ENCODE measurements at regions of chr16 and their contacts with region 1.

Region 1: GRCh38 chr16:21603928-21604327 is 4.6 kb downstream of the METTL9 start:
- DNase-seq: no peak
- H3K4me3 ChIP-seq: no peak overlapping the region
- H3K27ac ChIP-seq: no peak overlapping the region
- H3K4me1 ChIP-seq: peaks cover 0 to 12% (median 4%) of the 10 kb centered on the region in 4 experiments; a peak in 6 of 7 replicates
- H3K27me3 ChIP-seq: no peaks in the 10 kb centered on the region
- CTCF ChIP-seq: no peak
- EP300 ChIP-seq: no peak
- POLR2A ChIP-seq: no peak
- RAD21 ChIP-seq: no peak

Region 2: DNA sequence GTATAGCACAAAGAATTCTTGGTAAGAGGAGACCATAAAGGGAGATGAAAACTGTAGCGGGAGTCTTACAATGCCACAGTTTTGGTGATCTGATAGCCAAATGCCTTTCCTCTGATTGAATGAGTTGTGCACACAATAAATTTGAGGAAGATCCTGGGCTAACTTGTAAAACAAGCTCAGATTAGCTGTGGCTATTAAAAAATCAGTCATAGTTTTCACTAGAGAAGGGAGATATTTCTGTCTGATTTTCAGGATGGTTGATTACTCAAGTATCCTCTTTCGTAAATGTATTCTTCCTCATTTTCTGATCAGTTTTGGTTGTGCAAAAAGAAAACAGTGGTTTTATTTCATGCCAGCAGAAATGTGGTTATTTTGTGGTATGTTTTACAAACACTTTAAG is 13.6 kb before region 1 on chr16:
- CTCF ChIA-PET with region 1: interaction called, 13 read pairs
- POLR2A ChIA-PET with region 1: interaction called, 5 read pairs
- DNase-seq: no peak
- H3K4me3 ChIP-seq: no peak overlapping the region
- H3K27ac ChIP-seq: no peak overlapping the region
- H3K4me1 ChIP-seq: no peaks in the 10 kb centered on the region
- H3K27me3 ChIP-seq: no peaks in the 10 kb centered on the region
- CTCF ChIP-seq: no peak
- EP300 ChIP-seq: no peak
- POLR2A ChIP-seq: no peak
- RAD21 ChIP-seq: no peak

Region 3: GRCh38 chr16:21650521-21650920 is 46.6 kb after region 1 on chr16:
- CTCF ChIA-PET with region 1: no interaction called
- POLR2A ChIA-PET with region 1: no interaction called
- DNase-seq: no peak
- H3K4me3 ChIP-seq: no peak overlapping the region
- H3K27ac ChIP-seq: no peak overlapping the region
- H3K4me1 ChIP-seq: no peaks in the 10 kb centered on the region
- H3K27me3 ChIP-seq: no peaks in the 10 kb centered on the region
- CTCF ChIP-seq: no peak
- EP300 ChIP-seq: no peak
- POLR2A ChIP-seq: no peak
- RAD21 ChIP-seq: no peak